RWPE1 (cell line): ENCODE measurements at regions of chr4 and their contacts with region 1.

Region 1: DNA sequence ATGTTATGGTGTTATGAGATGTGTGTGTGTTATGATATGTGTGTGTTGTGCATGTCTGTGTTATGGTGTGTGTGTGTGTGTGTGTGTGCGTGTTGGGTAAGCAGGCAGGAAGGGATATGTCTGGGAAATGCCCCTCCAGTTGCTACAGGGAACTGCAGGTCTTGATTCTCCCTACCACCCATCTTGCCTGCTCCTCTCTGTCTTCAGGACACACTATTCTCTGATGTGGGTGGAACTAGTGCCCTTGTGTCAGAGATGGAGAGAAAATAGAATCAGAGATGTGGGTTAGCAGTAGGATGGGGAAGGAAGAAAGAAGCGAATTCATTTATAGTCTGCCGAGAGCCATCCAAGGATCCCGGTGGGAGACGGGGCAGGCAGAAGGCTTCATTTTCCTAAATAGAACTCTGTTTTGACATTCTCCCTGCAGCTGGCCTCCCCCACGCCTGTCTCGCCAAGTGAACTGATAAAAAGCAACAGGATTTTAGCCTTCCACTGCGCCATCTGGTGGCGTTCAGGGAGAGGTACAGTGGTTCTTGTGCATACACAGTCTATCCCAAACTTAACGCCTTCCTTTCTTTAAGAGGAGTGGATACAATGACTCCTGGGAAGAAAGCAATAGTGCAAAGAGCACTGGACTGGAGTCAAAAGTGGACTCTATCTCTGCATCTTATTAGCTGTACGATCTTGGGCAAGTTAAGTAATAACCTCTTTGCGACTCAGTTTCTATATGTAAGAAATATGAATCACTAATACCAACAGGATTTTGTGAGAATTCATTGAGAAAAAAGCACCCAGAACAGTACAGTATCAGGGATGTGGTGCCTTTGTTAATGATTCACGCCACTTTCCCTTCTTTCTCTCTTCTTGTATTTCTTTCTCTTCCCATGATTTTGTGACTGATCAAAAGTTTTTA is 14.1 kb upstream of the MGST2 start:
- DNase-seq: peak; percentile 52
- H3K27ac ChIP-seq: no peak overlapping the region
- CTCF ChIP-seq: peak; percentile 87

Region 2: GRCh38 chr4:139603576-139604387 is 47.8 kb before region 1 on chr4:
- CTCF ChIA-PET with region 1: interaction called, 54 read pairs
- POLR2A ChIA-PET with region 1: no interaction called
- DNase-seq: peak; percentile 44
- H3K27ac ChIP-seq: no peak overlapping the region
- CTCF ChIP-seq: peak; percentile 74